ENCODE measurements at regions of chr10 and their contacts with region 1.

Region 1: GRCh38 chr10:72126184-72126871 is 38.0 kb upstream of the SPOCK2 start:
- DNase-seq: peak; percentile 65
- H3K4me3 ChIP-seq: no peak overlapping the region
- H3K27ac ChIP-seq: no peak overlapping the region
- H3K4me1 ChIP-seq: no peaks in the 10 kb centered on the region
- H3K27me3 ChIP-seq: no peaks in the 10 kb centered on the region
- CTCF ChIP-seq: peak; percentile 39
- POLR2A ChIP-seq: no peak

Region 2: DNA sequence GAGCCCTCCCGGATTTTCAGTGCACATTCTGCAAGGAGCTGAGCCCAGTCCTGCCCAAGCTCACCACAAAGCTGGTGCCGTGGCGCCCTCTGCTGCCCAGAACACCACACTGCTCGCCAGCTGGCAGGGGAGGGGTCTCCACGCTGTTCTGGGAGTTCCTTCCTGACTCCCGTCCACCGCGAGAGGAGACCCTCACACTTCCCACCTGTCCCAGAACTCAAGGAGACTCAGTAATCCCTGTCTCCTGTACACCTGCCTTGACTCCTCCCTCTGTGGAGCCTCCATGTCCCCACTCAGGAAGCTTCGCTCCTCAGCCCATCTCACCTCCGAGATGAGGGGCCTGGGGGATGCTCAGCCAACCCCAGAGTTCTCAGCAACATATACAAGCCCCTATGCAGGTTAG is 418.0 kb before region 1 on chr10:
- CTCF ChIA-PET with region 1: no interaction called
- POLR2A ChIA-PET with region 1: no interaction called
- dilution Hi-C with region 1: no loop called
- intact Hi-C with region 1: no loop called
- DNase-seq: peak; percentile 54
- H3K4me3 ChIP-seq: no peak overlapping the region
- H3K27ac ChIP-seq: no peak overlapping the region
- H3K4me1 ChIP-seq: no peaks in the 10 kb centered on the region
- H3K27me3 ChIP-seq: peaks cover 0 to 3% of the 10 kb centered on the region in 2 experiments
- CTCF ChIP-seq: peak; percentile 84 to 94
- POLR2A ChIP-seq: no peak

Region 3: GRCh38 chr10:72107325-72108003 is 18.9 kb before region 1 on chr10:
- CTCF ChIA-PET with region 1: interaction called, 11 read pairs
- POLR2A ChIA-PET with region 1: interaction called, 4 read pairs
- dilution Hi-C with region 1: no loop called
- intact Hi-C with region 1: no loop called
- DNase-seq: no peak
- H3K4me3 ChIP-seq: no peak overlapping the region
- H3K27ac ChIP-seq: no peak overlapping the region
- H3K4me1 ChIP-seq: no peaks in the 10 kb centered on the region
- H3K27me3 ChIP-seq: no peaks in the 10 kb centered on the region
- CTCF ChIP-seq: no peak
- POLR2A ChIP-seq: no peak

Region 4: GRCh38 chr10:72186258-72186981 is 60.1 kb after region 1 on chr10:
- CTCF ChIA-PET with region 1: interaction called, 13 read pairs
- POLR2A ChIA-PET with region 1: interaction called, 3 read pairs
- dilution Hi-C with region 1: no loop called
- intact Hi-C with region 1: no loop called
- DNase-seq: peak; percentile 80
- H3K4me3 ChIP-seq: peak overlapping the region in 2 of 3 experiments; percentile 7 to 39
- H3K27ac ChIP-seq: peak overlapping the region; percentile 57
- H3K4me1 ChIP-seq: peaks cover 11% of the 10 kb centered on the region
- H3K27me3 ChIP-seq: no peaks in the 10 kb centered on the region
- CTCF ChIP-seq: no peak
- POLR2A ChIP-seq: no peak

Region 5: GRCh38 chr10:72229261-72230251 is 103.2 kb after region 1 on chr10:
- CTCF ChIA-PET with region 1: interaction called, 193 read pairs
- POLR2A ChIA-PET with region 1: no interaction called
- dilution Hi-C with region 1: no loop called
- intact Hi-C with region 1: no loop called
- DNase-seq: no peak
- H3K4me3 ChIP-seq: no peak overlapping the region
- H3K27ac ChIP-seq: no peak overlapping the region
- H3K4me1 ChIP-seq: no peaks in the 10 kb centered on the region
- H3K27me3 ChIP-seq: no peaks in the 10 kb centered on the region
- CTCF ChIP-seq: no peak
- POLR2A ChIP-seq: no peak

Region 6: GRCh38 chr10:72260588-72261322 is 134.4 kb after region 1 on chr10:
- CTCF ChIA-PET with region 1: interaction called, 11 read pairs
- POLR2A ChIA-PET with region 1: no interaction called
- dilution Hi-C with region 1: no loop called
- intact Hi-C with region 1: no loop called
- DNase-seq: peak; percentile 55
- H3K4me3 ChIP-seq: peak overlapping the region; percentile 61 to 78 (median 71)
- H3K27ac ChIP-seq: peak overlapping the region; percentile 26
- H3K4me1 ChIP-seq: peaks cover 17% of the 10 kb centered on the region
- H3K27me3 ChIP-seq: no peaks in the 10 kb centered on the region
- CTCF ChIP-seq: no peak
- POLR2A ChIP-seq: no peak

Region 7: GRCh38 chr10:72331601-72332422 is 205.5 kb after region 1 on chr10:
- CTCF ChIA-PET with region 1: interaction called, 144 read pairs
- POLR2A ChIA-PET with region 1: interaction called, 3 read pairs
- dilution Hi-C with region 1: no loop called
- intact Hi-C with region 1: loop called (anchors 1 kb)
- DNase-seq: peak; percentile 86
- H3K4me3 ChIP-seq: no peak overlapping the region
- H3K27ac ChIP-seq: peak overlapping the region; percentile 75
- H3K4me1 ChIP-seq: peaks cover 58% of the 10 kb centered on the region
- H3K27me3 ChIP-seq: no peaks in the 10 kb centered on the region
- CTCF ChIP-seq: peak; percentile 20 to 59
- POLR2A ChIP-seq: no peak

Region 8: DNA sequence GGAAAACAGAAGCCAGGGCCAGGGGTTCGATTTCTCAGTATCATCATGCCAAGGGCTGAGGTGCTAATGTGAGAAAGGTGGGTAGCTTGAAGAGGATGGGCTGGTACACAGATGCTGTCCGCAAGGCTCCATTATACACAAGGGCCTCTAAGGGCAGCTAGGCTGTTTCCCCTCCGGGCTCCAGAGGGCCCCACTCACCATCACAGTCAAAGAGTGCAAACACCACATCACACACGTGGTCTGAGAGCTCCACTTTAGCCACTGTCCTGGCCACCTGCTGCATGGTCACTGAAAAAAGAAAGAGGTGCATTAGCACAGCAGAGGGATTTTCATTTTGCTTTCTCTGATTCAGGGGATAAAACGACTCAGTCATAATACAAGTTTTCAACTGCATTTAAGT is 249.3 kb after region 1 on chr10:
- CTCF ChIA-PET with region 1: no interaction called
- POLR2A ChIA-PET with region 1: no interaction called
- dilution Hi-C with region 1: no loop called
- intact Hi-C with region 1: no loop called
- DNase-seq: no peak
- H3K4me3 ChIP-seq: no peak overlapping the region
- H3K27ac ChIP-seq: no peak overlapping the region
- H3K4me1 ChIP-seq: no peaks in the 10 kb centered on the region
- H3K27me3 ChIP-seq: no peaks in the 10 kb centered on the region
- CTCF ChIP-seq: peak in 1 of 2 donors; percentile 12
- POLR2A ChIP-seq: no peak

Measured in endothelial cell of umbilical vein (primary cell).